H1 (cell line): ENCODE measurements at regions of chr7 and their contacts with region 1.

Region 1: DNA sequence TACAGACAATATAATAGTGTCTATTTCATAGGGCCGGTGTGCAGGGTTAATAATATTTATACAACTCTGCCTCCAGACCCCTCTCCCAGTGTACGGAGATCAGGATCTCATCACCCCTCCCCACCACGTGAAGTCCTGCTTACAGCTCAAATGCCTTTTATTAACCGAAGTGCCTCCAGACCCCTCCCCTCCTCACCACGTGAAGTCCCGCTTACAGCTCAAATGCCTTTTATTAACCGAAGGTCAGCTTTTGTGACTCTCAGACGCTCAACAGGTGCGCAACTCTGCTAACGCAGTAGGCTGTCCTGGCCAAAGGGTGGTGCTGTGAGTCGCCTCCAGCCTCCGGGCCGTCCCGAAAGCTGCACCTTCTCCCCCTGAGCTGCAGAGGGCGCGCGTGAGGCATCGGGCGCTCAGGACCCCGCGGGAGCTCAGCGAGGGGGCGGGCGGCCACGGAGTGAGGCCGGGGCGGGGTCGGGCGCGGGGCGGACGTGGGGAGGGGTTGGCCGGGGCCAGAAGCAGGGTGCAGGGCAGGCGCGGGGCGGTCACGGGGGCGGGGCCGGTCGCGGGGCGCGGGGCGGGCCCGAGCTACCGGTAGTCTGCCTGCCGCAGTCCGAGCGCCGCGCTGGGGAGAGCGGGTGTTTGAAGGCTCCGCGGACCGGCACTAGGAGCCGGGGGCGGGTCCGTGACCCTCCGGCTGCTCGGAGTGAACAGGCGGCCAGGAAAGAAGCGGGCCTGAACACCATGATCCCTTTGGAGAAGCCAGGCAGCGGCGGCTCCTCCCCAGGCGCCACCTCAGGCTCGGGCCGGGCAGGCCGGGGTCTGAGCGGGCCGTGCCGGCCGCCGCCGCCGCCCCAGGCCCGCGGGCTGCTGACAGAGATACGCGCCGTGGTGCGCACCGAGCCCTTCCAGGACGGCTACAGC is at the start of gene STK17A:
- DNase-seq: peak; percentile 87 to 94
- H3K4me3 ChIP-seq: peak within 1 kb of the TSS; percentile 77 to 90 (median 84)
- H3K27ac ChIP-seq: no peak within 1 kb of the TSS
- H3K4me1 ChIP-seq: peaks cover 0 to 12% (median 5%) of the 10 kb centered on the region in 4 experiments; a peak in 6 of 7 replicates
- H3K27me3 ChIP-seq: no peaks in the 10 kb centered on the region; a peak in 3 of 7 replicates
- CTCF ChIP-seq: peak; percentile 99
- EP300 ChIP-seq: 0 out of 3 replicates have a peak, but pooled peaks of 1 of the 2 experiments have one; percentile 45
- POLR2A ChIP-seq: peak in 1 of 2 experiments; percentile 85; a peak in 2 of 3 replicates
- RAD21 ChIP-seq: peak; percentile 94 to 95
- total RNA-seq, gene STK17A: 12.2 and 13.4 TPM in 2 replicates

Region 2: GRCh38 chr7:43328785-43329380 is 253.9 kb before region 1 on chr7:
- CTCF ChIA-PET with region 1: no interaction called
- POLR2A ChIA-PET with region 1: no interaction called
- DNase-seq: no peak
- H3K4me3 ChIP-seq: no peak overlapping the region
- H3K27ac ChIP-seq: no peak overlapping the region
- H3K4me1 ChIP-seq: peaks cover 0 to 3% (median 1%) of the 10 kb centered on the region in 4 experiments; a peak in 1 of 7 replicates
- H3K27me3 ChIP-seq: no peaks in the 10 kb centered on the region
- CTCF ChIP-seq: no peak
- EP300 ChIP-seq: no peak
- POLR2A ChIP-seq: no peak
- RAD21 ChIP-seq: no peak

Region 3: GRCh38 chr7:43480581-43480980 is 102.2 kb before region 1 on chr7:
- CTCF ChIA-PET with region 1: interaction called, 10 read pairs
- POLR2A ChIA-PET with region 1: no interaction called
- DNase-seq: no peak
- H3K4me3 ChIP-seq: no peak overlapping the region
- H3K27ac ChIP-seq: no peak overlapping the region
- H3K4me1 ChIP-seq: no peaks in the 10 kb centered on the region
- H3K27me3 ChIP-seq: no peaks in the 10 kb centered on the region
- CTCF ChIP-seq: no peak
- EP300 ChIP-seq: no peak
- POLR2A ChIP-seq: no peak
- RAD21 ChIP-seq: no peak

Region 4: DNA sequence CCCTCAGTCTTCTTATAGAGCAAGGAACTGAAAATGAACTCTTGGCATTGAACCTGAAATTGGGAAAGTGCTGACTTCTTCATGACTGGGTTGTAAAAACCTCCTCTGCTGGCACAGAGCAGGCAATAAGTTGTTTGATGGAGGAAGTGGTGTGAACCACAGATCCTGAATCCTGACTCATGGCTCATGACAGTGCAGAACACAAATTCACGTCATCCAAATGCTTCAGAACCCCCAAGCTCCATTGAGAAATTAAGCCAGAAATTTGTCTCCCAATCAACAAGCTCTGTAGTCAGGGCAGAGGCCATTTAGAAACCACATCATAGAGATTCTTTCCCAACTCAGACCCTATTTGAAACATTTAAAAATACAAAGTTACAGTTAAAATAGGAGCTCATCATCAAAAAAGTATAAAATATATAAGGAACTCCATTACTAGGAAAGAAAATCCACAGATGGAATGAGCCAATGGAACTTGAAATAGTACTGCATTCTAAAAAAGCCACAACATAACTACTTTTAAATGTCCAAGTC is 10.2 kb before region 1 on chr7:
- CTCF ChIA-PET with region 1: interaction called, 44 read pairs
- POLR2A ChIA-PET with region 1: interaction called, 4 read pairs
- DNase-seq: no peak
- H3K4me3 ChIP-seq: no peak overlapping the region
- H3K27ac ChIP-seq: no peak overlapping the region
- H3K4me1 ChIP-seq: peaks cover 0 to 3% (median under 1%) of the 10 kb centered on the region in 4 experiments; a peak in 1 of 7 replicates
- H3K27me3 ChIP-seq: no peaks in the 10 kb centered on the region
- CTCF ChIP-seq: no peak
- EP300 ChIP-seq: no peak
- POLR2A ChIP-seq: no peak
- RAD21 ChIP-seq: no peak

Region 5: GRCh38 chr7:43636093-43636492 is 53.3 kb after region 1 on chr7:
- CTCF ChIA-PET with region 1: interaction called, 10 read pairs
- POLR2A ChIA-PET with region 1: no interaction called
- DNase-seq: no peak
- H3K4me3 ChIP-seq: no peak overlapping the region
- H3K27ac ChIP-seq: no peak overlapping the region
- H3K4me1 ChIP-seq: no peaks in the 10 kb centered on the region
- H3K27me3 ChIP-seq: no peaks in the 10 kb centered on the region
- CTCF ChIP-seq: no peak
- EP300 ChIP-seq: no peak
- POLR2A ChIP-seq: no peak
- RAD21 ChIP-seq: no peak

Region 6: GRCh38 chr7:43700059-43700501 is 117.3 kb after region 1 on chr7:
- CTCF ChIA-PET with region 1: interaction called, 46 read pairs
- POLR2A ChIA-PET with region 1: interaction called, 5 read pairs
- DNase-seq: no peak
- H3K4me3 ChIP-seq: no peak overlapping the region
- H3K27ac ChIP-seq: no peak overlapping the region
- H3K4me1 ChIP-seq: peaks cover 0 to 5% (median 0%) of the 10 kb centered on the region in 4 experiments; a peak in 2 of 7 replicates
- H3K27me3 ChIP-seq: no peaks in the 10 kb centered on the region
- CTCF ChIP-seq: peak in 2 of 3 experiments; percentile 25 to 27; a peak in 2 of 4 replicates
- EP300 ChIP-seq: no peak
- POLR2A ChIP-seq: no peak
- RAD21 ChIP-seq: peak; percentile 67 to 73

Region 7: GRCh38 chr7:43834463-43835251 is 251.9 kb after region 1 on chr7:
- CTCF ChIA-PET with region 1: interaction called, 24 read pairs
- POLR2A ChIA-PET with region 1: interaction called, 3 read pairs
- DNase-seq: no peak
- H3K4me3 ChIP-seq: no peak overlapping the region
- H3K27ac ChIP-seq: no peak overlapping the region
- H3K4me1 ChIP-seq: peaks cover 0 to 5% (median 3%) of the 10 kb centered on the region in 4 experiments; a peak in 3 of 7 replicates
- H3K27me3 ChIP-seq: no peaks in the 10 kb centered on the region
- CTCF ChIP-seq: no peak
- EP300 ChIP-seq: no peak
- POLR2A ChIP-seq: no peak
- RAD21 ChIP-seq: no peak